ENCODE measurements at regions of chr9 and their contacts with region 1.

Region 1: GRCh38 chr9:19456996-19457692 is 48.3 kb downstream of the ACER2 start:
- DNase-seq: peak; percentile 51
- H3K4me3 ChIP-seq: peak overlapping the region; percentile 39
- H3K27ac ChIP-seq: no peak overlapping the region
- H3K27me3 ChIP-seq: no peaks in the 10 kb centered on the region
- CTCF ChIP-seq: peak; percentile 97

Region 2: GRCh38 chr9:19048966-19049916 is 407.9 kb before region 1 on chr9 and contains the start of gene RRAGA:
- CTCF ChIA-PET with region 1: interaction called, 27 read pairs
- POLR2A ChIA-PET with region 1: interaction called, 3 read pairs
- DNase-seq: peak; percentile 94
- H3K4me3 ChIP-seq: peak within 1 kb of the TSS; percentile 88
- H3K27ac ChIP-seq: peak within 1 kb of the TSS; percentile 94
- H3K27me3 ChIP-seq: no peaks in the 10 kb centered on the region
- CTCF ChIP-seq: peak; percentile 85
- polyA plus RNA-seq, gene RRAGA: 180 and 186 TPM in 2 replicates

Region 3: GRCh38 chr9:19085295-19085694 is 371.8 kb before region 1 on chr9:
- CTCF ChIA-PET with region 1: interaction called, 12 read pairs
- POLR2A ChIA-PET with region 1: no interaction called
- DNase-seq: no peak
- H3K4me3 ChIP-seq: no peak overlapping the region
- H3K27ac ChIP-seq: no peak overlapping the region
- H3K27me3 ChIP-seq: no peaks in the 10 kb centered on the region
- CTCF ChIP-seq: peak; percentile 37

Measured in AG04450 (cell line).